Endothelial cell of umbilical vein (primary cell): ENCODE measurements at regions of chr6 and their contacts with region 1.

Region 1: DNA sequence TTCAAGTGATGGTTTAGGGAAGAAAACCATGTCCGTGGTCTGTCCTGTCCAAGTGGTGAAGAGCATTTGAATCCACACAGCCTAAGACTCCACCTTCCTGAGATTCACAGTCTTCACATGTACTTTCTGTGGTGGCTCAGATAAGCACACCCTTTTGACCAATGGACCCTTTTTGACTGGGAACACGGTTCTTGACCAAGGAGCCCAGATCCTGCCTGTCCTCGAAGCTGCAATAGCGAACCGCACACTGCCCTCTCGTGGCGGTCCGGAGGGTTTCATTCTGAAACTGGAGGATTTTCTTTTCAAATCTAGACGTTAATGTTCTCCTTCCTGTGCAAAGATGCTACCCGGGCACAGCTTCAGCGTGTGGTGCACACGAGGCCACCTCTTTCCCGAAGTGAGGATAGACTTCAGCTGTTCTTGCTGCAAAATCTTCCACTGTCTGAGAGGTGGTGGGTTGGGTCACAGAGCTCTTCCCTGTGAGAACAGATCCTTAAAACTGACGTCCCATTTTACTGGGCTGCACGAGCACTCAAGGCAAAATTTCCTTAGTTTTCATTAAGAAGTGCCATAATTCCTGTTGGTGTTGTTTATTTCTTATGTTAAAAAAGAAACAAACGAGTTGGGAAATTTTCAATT is 90.5 kb downstream of the SYNJ2 start:
- DNase-seq: peak; percentile 76
- H3K4me3 ChIP-seq: no peak overlapping the region
- H3K27ac ChIP-seq: peak overlapping the region; percentile 34
- H3K4me1 ChIP-seq: peaks cover 38% of the 10 kb centered on the region
- H3K27me3 ChIP-seq: no peaks in the 10 kb centered on the region
- CTCF ChIP-seq: peak; percentile 76 to 86
- POLR2A ChIP-seq: no peak

Region 2: DNA sequence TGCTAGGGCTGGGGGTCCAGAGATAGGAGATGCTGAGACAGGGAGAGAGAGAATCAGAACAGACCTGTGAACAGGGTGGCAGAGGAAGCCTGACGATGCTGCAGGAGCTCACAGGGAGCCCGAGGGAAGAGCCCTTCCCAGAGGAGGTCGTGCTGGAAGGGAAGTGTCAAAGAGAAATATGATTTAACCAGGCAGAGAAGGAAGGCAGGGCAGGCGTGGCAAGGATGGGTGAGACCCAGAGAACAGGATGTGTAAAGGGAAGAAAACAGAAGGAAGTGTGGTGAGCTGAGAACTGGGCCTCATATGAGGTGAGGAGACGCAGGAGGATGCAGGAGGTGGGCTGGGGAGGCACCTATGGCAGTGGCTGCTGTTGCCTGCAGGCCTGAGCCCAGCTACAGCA is 585.6 kb before region 1 on chr6:
- CTCF ChIA-PET with region 1: no interaction called
- POLR2A ChIA-PET with region 1: no interaction called
- dilution Hi-C with region 1: no loop called
- intact Hi-C with region 1: no loop called
- DNase-seq: no peak
- H3K4me3 ChIP-seq: no peak overlapping the region
- H3K27ac ChIP-seq: no peak overlapping the region
- H3K4me1 ChIP-seq: no peaks in the 10 kb centered on the region
- H3K27me3 ChIP-seq: no peaks in the 10 kb centered on the region
- CTCF ChIP-seq: no peak
- POLR2A ChIP-seq: no peak

Region 3: DNA sequence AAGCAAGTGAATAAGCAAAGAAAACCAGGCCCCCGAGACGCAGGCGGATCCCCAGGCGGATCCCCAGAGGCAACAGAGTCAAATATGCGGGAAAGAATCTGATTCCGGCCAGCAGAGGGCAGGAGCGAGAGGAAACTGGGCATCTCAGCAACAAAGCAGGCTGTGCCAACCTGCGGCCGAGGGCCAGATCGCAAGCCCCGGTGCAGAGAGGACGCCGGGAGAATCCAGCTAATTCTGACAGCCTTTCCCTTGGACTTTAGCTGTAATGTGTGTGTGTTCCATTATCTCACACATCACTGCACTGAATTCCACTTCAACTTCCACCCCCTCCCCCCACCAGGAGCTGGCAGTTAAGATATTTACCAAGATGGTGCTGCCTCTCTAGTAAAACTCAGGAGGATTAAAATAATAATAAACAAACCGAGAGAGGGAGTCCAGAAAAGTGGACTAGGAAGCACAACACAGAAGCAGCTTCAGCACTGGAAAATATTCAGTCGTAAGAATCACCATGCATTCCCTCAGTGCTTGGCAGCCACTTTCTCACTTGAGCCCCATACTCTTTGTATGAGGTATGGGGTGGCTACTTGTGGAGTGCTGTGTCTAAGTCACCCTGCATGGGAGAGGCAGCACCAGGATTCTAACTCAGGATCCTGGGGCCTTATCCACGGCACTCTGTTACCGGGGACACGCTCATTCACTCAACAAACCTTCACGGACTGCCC is 315.3 kb before region 1 on chr6:
- CTCF ChIA-PET with region 1: interaction called, 21 read pairs
- POLR2A ChIA-PET with region 1: no interaction called
- dilution Hi-C with region 1: no loop called
- intact Hi-C with region 1: loop called (anchors 1 kb)
- DNase-seq: peak; percentile 88
- H3K4me3 ChIP-seq: no peak overlapping the region
- H3K27ac ChIP-seq: peak overlapping the region; percentile 3
- H3K4me1 ChIP-seq: peaks cover 47% of the 10 kb centered on the region
- H3K27me3 ChIP-seq: no peaks in the 10 kb centered on the region
- CTCF ChIP-seq: peak; percentile 80 to 83
- POLR2A ChIP-seq: no peak

Region 4: DNA sequence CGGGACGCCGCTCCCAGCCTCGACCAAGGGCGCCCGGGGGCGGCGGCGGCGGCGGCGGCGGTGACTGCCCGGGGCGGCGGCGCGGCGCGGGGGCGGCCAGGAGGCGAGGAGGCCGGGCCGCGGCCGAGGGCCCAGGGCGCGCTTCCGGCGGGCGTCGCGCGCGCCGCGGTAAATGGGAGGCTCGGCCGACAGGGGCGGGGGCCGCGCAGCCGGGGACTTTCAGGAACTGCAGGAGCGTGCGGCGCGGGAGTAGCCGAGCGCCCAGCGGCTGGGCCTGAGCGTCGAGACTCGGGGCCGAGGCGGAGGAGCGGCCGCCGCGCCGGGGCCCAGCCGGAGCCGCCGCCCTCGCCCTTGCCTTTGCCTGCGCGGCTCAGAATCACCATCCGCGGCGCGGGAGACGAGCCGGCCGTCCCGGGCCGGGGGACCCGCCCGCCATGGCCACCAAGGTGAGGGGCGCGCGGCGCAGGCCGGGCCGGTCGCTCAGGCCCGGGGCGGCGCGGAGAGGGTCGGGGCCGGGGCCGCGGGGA is 249.1 kb before region 1 on chr6 and contains the start of gene SNX9:
- CTCF ChIA-PET with region 1: no interaction called
- POLR2A ChIA-PET with region 1: no interaction called
- dilution Hi-C with region 1: no loop called
- intact Hi-C with region 1: loop called (anchors 5 kb)
- DNase-seq: peak; percentile 65
- H3K4me3 ChIP-seq: peak within 1 kb of the TSS; percentile 50 to 99 (median 89)
- H3K27ac ChIP-seq: peak within 1 kb of the TSS; percentile 86
- H3K4me1 ChIP-seq: peaks cover 32% of the 10 kb centered on the region
- H3K27me3 ChIP-seq: no peaks in the 10 kb centered on the region
- CTCF ChIP-seq: no peak
- POLR2A ChIP-seq: peak; percentile 55
- total RNA-seq, gene SNX9: 51.4 and 54.5 TPM in 2 replicates

Region 5: GRCh38 chr6:157981395-157982296 is 90.6 kb before region 1 on chr6 and contains the start of gene SYNJ2:
- CTCF ChIA-PET with region 1: interaction called, 82 read pairs
- POLR2A ChIA-PET with region 1: interaction called, 3 read pairs
- dilution Hi-C with region 1: no loop called
- intact Hi-C with region 1: loop called (anchors 1 kb)
- DNase-seq: peak; percentile 73
- H3K4me3 ChIP-seq: peak within 1 kb of the TSS; percentile 59 to 91 (median 87)
- H3K27ac ChIP-seq: peak within 1 kb of the TSS; percentile 85
- H3K4me1 ChIP-seq: peaks cover 21% of the 10 kb centered on the region
- H3K27me3 ChIP-seq: no peaks in the 10 kb centered on the region
- CTCF ChIP-seq: peak; percentile 67 to 79
- POLR2A ChIP-seq: peak; percentile 38
- total RNA-seq, gene SYNJ2: 71.8 and 78.2 TPM in 2 replicates

Region 6: GRCh38 chr6:158009114-158009891 is 62.9 kb before region 1 on chr6:
- CTCF ChIA-PET with region 1: interaction called, 7 read pairs
- POLR2A ChIA-PET with region 1: no interaction called
- dilution Hi-C with region 1: no loop called
- intact Hi-C with region 1: loop called (anchors 1 kb)
- DNase-seq: peak; percentile 89
- H3K4me3 ChIP-seq: no peak overlapping the region
- H3K27ac ChIP-seq: peak overlapping the region; percentile 79
- H3K4me1 ChIP-seq: peaks cover 48% of the 10 kb centered on the region
- H3K27me3 ChIP-seq: no peaks in the 10 kb centered on the region
- CTCF ChIP-seq: no peak
- POLR2A ChIP-seq: no peak

Region 7: DNA sequence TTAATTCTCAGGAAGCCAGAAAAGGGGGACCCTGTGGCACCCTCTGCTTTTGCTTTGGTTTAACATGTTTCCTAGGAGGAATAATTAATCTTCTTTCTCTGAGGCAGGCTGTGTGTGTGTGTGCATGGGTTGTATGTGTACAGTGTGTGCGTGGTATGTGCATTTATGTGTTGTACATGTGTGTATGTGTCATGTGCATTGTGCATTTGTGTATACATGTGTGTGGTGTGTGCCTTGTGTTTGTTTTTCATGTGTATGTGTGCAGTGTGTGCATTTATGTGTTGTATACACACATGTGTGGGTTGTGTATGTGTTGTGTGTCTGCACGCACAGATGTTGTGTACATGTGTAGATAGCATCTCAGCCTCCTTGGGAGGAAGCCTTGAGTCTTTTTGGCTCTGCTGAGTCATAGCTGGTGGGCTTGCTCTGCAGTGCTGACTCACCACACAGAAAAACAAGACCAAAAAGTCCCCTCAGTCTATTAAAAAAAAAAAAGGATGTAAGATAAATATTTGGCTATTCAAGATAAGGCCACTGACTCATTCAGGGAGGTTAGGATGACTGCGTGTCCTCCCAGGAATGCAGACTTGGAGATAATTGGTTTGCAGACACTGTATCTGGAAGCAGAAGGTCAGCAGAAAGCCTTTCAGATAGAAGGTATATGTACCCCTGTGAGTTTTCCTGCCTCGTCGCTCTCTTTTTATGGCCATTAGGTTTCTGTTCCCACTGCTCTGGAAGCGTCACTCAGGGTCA is 32.0 kb before region 1 on chr6:
- CTCF ChIA-PET with region 1: interaction called, 40 read pairs
- POLR2A ChIA-PET with region 1: interaction called, 3 read pairs
- dilution Hi-C with region 1: no loop called
- intact Hi-C with region 1: loop called (anchors 1 kb)
- DNase-seq: peak; percentile 99
- H3K4me3 ChIP-seq: no peak overlapping the region
- H3K27ac ChIP-seq: peak overlapping the region; percentile 99
- H3K4me1 ChIP-seq: peaks cover 38% of the 10 kb centered on the region
- H3K27me3 ChIP-seq: no peaks in the 10 kb centered on the region
- CTCF ChIP-seq: no peak
- POLR2A ChIP-seq: peak; percentile 89

Region 8: DNA sequence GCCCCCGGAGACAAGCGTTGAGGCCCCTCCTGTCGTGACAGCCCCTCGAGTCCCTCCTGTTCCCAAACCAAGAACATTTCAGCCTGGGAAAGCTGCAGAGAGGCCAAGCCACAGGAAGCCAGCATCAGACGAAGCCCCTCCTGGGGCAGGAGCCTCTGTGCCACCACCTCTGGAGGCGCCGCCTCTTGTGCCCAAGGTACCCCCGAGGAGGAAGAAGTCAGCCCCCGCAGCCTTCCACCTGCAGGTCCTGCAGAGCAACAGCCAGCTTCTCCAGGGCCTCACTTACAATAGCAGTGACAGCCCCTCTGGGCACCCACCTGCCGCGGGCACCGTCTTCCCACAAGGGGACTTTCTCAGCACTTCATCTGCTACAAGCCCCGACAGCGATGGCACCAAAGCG is 23.5 kb after region 1 on chr6:
- CTCF ChIA-PET with region 1: no interaction called
- POLR2A ChIA-PET with region 1: no interaction called
- dilution Hi-C with region 1: no loop called
- intact Hi-C with region 1: no loop called
- DNase-seq: no peak
- H3K4me3 ChIP-seq: no peak overlapping the region
- H3K27ac ChIP-seq: no peak overlapping the region
- H3K4me1 ChIP-seq: no peaks in the 10 kb centered on the region
- H3K27me3 ChIP-seq: no peaks in the 10 kb centered on the region
- CTCF ChIP-seq: no peak
- POLR2A ChIP-seq: no peak